B cell (primary cell): ENCODE measurements at regions of chr1 and their contacts with region 1.

Region 1: DNA sequence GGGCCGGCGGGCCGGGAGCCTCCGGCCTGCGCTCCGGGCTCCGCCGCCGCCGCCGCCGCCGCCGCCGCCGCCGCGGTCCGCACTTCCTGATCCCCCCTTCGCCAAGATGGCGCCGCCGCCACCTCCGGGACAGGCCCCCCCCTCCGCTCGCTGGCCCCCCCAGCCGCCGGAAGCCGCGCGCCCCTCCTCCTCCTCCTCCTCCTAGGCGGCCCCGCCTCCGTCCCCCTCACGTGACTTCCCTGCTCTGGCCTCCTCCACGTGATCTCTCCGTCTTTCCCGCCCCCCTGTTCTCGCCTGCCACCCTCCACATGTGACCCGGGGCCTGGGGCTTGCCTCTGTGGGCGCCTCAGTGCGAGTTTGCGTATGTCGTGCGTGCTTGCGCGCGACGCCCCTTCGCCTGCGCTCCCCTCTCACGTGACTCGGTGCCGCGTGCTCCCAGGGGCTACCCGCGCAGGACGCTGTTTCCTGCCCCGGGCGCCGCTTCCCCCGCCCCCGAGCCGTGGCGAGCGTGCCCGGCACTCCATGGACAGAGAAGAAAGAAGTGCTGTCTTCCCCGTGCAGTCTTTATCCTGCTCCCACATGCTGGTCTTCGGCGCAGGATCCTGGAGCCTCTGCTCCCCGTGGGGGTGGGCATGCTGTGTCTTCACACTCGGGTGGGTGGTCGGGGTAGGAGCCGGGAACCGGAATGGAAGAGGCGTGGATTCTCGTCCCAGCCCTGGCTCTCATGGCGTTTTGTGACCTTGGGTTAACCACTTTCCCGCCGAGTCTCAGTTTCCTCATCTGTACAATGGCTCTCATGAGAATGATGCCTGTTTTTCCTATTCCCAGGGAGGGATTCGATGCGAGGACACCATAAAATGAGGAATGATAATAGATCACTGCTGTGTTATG is at the start of gene UBE2Q1:
- DNase-seq: peak; percentile 100
- ATAC-seq: peak; percentile 84
- H3K4me3 ChIP-seq: peak within 1 kb of the TSS; percentile 69 to 90 (median 81)
- H3K4me3 Mint-ChIP-seq: peak within 1 kb of the TSS; percentile 96
- H3K27ac ChIP-seq: peak within 1 kb of the TSS; percentile 85
- H3K27ac Mint-ChIP-seq: peak within 1 kb of the TSS; percentile 95
- H3K4me1 ChIP-seq: peaks cover 18 to 29% of the 10 kb centered on the region in 2 donors
- H3K4me1 Mint-ChIP-seq: peaks cover 33% of the 10 kb centered on the region
- H3K27me3 ChIP-seq: no peaks in the 10 kb centered on the region
- H3K27me3 Mint-ChIP-seq: no peaks in the 10 kb centered on the region
- CTCF ChIP-seq: no peak
- total RNA-seq, gene UBE2Q1: 97.9 and 108 TPM in 2 replicates

Region 2: DNA sequence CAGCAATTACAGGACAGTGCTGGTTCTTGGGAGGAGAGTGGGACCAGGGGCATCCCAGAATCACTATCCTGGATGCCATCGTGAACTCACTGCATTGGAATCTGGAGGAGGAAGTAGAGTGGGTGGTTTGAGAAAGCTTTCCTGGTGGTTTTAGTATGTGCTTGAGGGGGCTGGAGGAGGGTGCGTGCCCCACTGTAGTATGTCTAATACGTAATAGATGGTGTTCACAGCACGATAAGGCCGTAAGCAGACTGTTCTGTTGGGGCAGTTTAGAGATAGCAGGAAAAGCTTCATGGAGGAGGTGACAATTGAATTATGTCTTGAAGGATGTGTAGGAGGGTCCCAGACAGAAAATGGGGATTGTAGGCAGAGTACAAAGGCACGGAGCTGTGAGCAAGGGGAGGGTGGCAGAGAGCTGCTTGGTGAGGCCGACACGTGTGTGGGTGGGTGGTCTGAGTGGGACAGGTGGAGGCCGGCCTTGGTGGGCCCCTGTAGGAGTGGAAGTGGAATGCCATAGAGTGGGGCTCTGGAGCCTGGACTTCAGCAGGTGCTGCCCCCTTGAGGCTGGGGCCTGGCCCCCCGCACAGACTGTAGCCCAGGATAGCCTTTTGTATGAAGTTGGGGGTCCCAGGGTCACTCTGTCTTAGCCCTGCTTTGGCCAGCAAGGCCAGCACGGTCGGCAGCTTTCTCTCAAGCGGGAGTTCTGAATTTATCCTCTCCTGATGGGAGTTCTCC is 116.6 kb before region 1 on chr1:
- CTCF ChIA-PET with region 1: no interaction called
- POLR2A ChIA-PET with region 1: no interaction called
- intact Hi-C with region 1: no loop called
- DNase-seq: no peak
- ATAC-seq: no peak
- H3K4me3 ChIP-seq: no peak overlapping the region
- H3K4me3 Mint-ChIP-seq: no peak overlapping the region
- H3K27ac ChIP-seq: no peak overlapping the region
- H3K27ac Mint-ChIP-seq: no peak overlapping the region
- H3K4me1 ChIP-seq: peaks cover 0 to 3% of the 10 kb centered on the region in 2 donors
- H3K4me1 Mint-ChIP-seq: peaks cover 13% of the 10 kb centered on the region
- H3K27me3 ChIP-seq: no peaks in the 10 kb centered on the region
- H3K27me3 Mint-ChIP-seq: no peaks in the 10 kb centered on the region
- CTCF ChIP-seq: peak; percentile 25

Region 3: GRCh38 chr1:154479764-154480421 is 78.9 kb before region 1 on chr1:
- CTCF ChIA-PET with region 1: interaction called, 19 read pairs
- POLR2A ChIA-PET with region 1: no interaction called
- intact Hi-C with region 1: no loop called
- DNase-seq: peak; percentile 82
- ATAC-seq: peak; percentile 89
- H3K4me3 ChIP-seq: no peak overlapping the region
- H3K4me3 Mint-ChIP-seq: no peak overlapping the region
- H3K27ac ChIP-seq: no peak overlapping the region
- H3K27ac Mint-ChIP-seq: no peak overlapping the region
- H3K4me1 ChIP-seq: no peaks in the 10 kb centered on the region
- H3K4me1 Mint-ChIP-seq: peaks cover 2% of the 10 kb centered on the region
- H3K27me3 ChIP-seq: no peaks in the 10 kb centered on the region
- H3K27me3 Mint-ChIP-seq: peaks cover 4% of the 10 kb centered on the region
- CTCF ChIP-seq: peak; percentile 99

Region 4: GRCh38 chr1:154512760-154513159 is 46.1 kb before region 1 on chr1:
- CTCF ChIA-PET with region 1: no interaction called
- POLR2A ChIA-PET with region 1: no interaction called
- intact Hi-C with region 1: no loop called
- DNase-seq: no peak
- ATAC-seq: no peak
- H3K4me3 ChIP-seq: no peak overlapping the region
- H3K4me3 Mint-ChIP-seq: no peak overlapping the region
- H3K27ac ChIP-seq: no peak overlapping the region
- H3K27ac Mint-ChIP-seq: no peak overlapping the region
- H3K4me1 ChIP-seq: no peaks in the 10 kb centered on the region
- H3K4me1 Mint-ChIP-seq: no peaks in the 10 kb centered on the region
- H3K27me3 ChIP-seq: peaks cover 0 to 17% (median 6%) of the 10 kb centered on the region in 4 experiments
- H3K27me3 Mint-ChIP-seq: peaks cover 50% of the 10 kb centered on the region
- CTCF ChIP-seq: no peak

Region 5: DNA sequence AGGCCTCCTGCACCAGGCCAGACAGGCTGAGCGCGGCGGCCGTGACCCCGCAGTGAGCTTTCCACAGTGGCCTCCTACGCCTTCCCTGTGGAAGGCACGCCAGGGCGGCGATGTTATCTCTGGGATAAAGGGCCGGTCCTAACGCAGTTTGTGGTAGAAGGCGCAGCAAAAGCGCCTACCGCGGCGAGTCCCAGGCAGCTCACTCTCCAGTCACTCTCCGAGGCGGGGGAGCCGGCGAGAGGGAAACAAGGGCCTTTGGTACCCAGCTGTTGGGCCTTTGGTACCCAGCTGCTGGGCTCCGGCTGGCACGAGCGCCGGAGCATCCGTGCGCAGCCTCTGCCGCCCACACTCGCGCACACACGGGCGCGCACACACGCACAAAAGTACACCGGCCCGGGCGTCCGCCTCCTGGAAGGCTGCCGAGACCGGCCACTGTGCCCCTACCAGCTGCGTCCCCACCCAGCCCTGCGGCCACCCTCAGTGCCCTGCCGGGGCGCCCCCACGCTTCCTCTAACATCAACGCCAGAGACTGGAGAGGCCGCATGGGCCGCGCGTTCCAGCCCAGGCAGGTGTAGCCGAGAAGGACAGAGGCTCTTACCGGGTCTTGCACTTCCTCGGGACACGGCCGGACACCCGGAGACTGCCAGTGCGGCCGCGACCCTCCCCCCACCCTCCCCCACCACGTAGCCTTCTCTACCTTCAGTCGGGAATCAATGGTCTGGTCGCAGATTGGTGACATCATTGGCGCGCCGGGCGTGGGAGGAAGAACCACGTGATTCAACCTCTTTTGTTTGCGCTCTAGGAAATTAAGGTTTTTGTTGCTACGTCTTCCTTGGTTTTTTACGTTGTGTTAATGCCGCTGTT is 68.7 kb after region 1 on chr1:
- CTCF ChIA-PET with region 1: interaction called, 7 read pairs
- POLR2A ChIA-PET with region 1: no interaction called
- intact Hi-C with region 1: loop called (anchors 1 kb)
- DNase-seq: peak; percentile 93
- ATAC-seq: peak; percentile 77
- H3K4me3 ChIP-seq: peak overlapping the region; percentile 66 to 94 (median 88)
- H3K4me3 Mint-ChIP-seq: peak overlapping the region; percentile 94
- H3K27ac ChIP-seq: peak overlapping the region; percentile 94 to 98
- H3K27ac Mint-ChIP-seq: peak overlapping the region; percentile 99
- H3K4me1 ChIP-seq: peaks cover 8 to 12% of the 10 kb centered on the region in 2 donors
- H3K4me1 Mint-ChIP-seq: peaks cover 35% of the 10 kb centered on the region
- H3K27me3 ChIP-seq: peaks cover 0 to 3% (median 0%) of the 10 kb centered on the region in 4 experiments
- H3K27me3 Mint-ChIP-seq: peaks cover 6% of the 10 kb centered on the region
- CTCF ChIP-seq: no peak

Region 6: DNA sequence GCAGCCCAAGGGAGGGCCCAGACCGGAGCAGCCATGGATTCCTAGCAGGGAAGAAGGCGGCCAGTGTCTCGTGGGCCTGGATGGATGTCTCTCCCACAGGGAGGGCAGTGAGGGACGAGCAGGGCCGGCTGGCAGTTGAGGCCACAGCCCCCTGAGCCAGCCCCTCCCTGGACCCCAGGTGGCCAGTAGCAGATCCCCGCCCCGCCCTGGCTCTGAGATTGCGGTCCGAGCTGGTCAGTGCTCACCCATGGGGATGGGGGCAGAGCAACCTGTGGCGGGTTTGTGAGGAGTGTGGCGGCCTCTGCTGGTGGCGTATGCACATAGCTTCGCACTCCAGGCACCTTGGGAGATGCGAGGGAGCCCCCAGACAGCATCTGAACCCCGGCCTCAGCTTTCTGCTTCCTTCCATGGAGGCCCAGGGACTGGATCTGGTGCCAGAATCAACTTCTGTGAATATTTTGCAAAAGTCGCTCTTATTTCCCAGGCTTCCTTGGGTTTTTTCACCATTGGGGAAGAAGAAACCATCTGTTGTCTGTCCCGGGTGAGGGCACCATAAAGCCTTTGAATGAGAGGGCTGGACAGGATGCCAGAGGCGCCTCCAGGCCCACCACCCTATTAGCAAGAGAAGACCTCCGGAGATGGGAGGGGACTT is 319.7 kb after region 1 on chr1:
- CTCF ChIA-PET with region 1: interaction called, 37 read pairs
- POLR2A ChIA-PET with region 1: no interaction called
- intact Hi-C with region 1: loop called (anchors 1 kb)
- DNase-seq: peak; percentile 78
- ATAC-seq: peak; percentile 93
- H3K4me3 ChIP-seq: no peak overlapping the region
- H3K4me3 Mint-ChIP-seq: no peak overlapping the region
- H3K27ac ChIP-seq: no peak overlapping the region
- H3K27ac Mint-ChIP-seq: no peak overlapping the region
- H3K4me1 ChIP-seq: peaks cover 0 to 2% of the 10 kb centered on the region in 2 donors
- H3K4me1 Mint-ChIP-seq: no peaks in the 10 kb centered on the region
- H3K27me3 ChIP-seq: no peaks in the 10 kb centered on the region
- H3K27me3 Mint-ChIP-seq: no peaks in the 10 kb centered on the region
- CTCF ChIP-seq: peak; percentile 89

Region 7: DNA sequence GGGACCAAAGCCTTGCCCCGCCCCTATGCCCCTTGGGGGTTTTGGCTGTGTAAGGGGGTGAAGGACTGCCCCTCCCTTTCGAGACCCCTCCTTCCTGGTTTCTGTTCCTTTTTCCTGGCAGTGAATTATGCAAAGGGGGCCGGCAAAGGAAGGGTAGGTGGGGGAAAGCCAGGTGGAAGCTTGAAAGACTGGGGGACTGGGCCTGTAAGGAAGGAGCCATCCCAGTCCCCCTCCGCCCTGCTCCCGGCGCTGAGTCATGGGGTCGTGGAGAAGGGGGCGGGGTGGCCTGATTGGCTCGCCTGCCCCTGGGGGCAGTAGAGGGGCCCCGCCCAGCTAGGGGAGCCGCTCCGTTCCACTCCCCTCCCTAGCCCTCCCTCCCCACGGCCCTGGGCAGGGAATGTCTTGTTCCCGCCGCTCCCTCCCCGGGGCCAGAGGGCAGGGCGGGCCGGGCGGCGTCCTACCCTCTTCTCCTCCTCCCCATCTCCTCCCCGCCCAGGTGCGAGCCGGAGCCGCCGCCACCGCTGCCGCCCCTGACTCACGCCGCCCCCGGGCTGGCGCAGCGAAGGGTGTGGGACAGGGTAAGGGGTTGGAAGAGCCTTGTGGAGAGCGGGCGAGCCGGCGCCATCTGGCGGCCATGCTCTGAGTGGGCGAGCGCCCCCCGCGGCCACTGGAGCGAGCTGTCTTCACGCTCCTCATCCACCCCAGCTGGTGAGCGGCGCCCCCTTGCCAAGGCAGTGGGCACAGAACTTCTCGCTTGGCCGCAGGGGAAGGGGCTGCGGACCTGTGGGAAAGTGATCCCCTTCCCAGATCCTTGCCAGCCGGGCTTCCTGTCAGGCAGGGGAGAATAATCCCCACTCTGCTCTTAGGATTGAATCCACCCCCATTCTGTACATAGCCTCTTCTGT is 458.5 kb after region 1 on chr1:
- CTCF ChIA-PET with region 1: interaction called, 19 read pairs
- POLR2A ChIA-PET with region 1: no interaction called
- intact Hi-C with region 1: loop called (anchors 1 kb)
- DNase-seq: peak; percentile 93
- ATAC-seq: peak; percentile 75
- H3K4me3 ChIP-seq: peak overlapping the region; percentile 9 to 68 (median 49)
- H3K4me3 Mint-ChIP-seq: peak overlapping the region; percentile 84
- H3K27ac ChIP-seq: peak overlapping the region; percentile 88 to 89
- H3K27ac Mint-ChIP-seq: peak overlapping the region; percentile 93
- H3K4me1 ChIP-seq: peaks cover 53 to 67% of the 10 kb centered on the region in 2 donors
- H3K4me1 Mint-ChIP-seq: peaks cover 69% of the 10 kb centered on the region
- H3K27me3 ChIP-seq: no peaks in the 10 kb centered on the region
- H3K27me3 Mint-ChIP-seq: no peaks in the 10 kb centered on the region
- CTCF ChIP-seq: peak; percentile 99